B cell (primary cell): ENCODE measurements at regions of chr20 and their contacts with region 1.

Region 1: GRCh38 chr20:57596998-57597939 is 23.0 kb downstream of the ZBP1 start:
- DNase-seq: peak; percentile 88
- ATAC-seq: peak; percentile 86
- H3K4me3 ChIP-seq: peak overlapping the region in 4 of 5 experiments; percentile 23 to 48 (median 35)
- H3K4me3 Mint-ChIP-seq: no peak overlapping the region
- H3K27ac ChIP-seq: no peak overlapping the region
- H3K27ac Mint-ChIP-seq: no peak overlapping the region
- H3K4me1 ChIP-seq: peaks cover 10 to 26% of the 10 kb centered on the region in 2 donors
- H3K4me1 Mint-ChIP-seq: peaks cover 18% of the 10 kb centered on the region
- H3K27me3 ChIP-seq: peaks cover 0 to 14% (median 2%) of the 10 kb centered on the region in 4 experiments
- H3K27me3 Mint-ChIP-seq: peaks cover 5% of the 10 kb centered on the region
- CTCF ChIP-seq: peak; percentile 97

Region 2: GRCh38 chr20:57383447-57384347 is 213.6 kb before region 1 on chr20:
- CTCF ChIA-PET with region 1: interaction called, 11 read pairs
- POLR2A ChIA-PET with region 1: no interaction called
- intact Hi-C with region 1: no loop called
- DNase-seq: no peak
- ATAC-seq: no peak
- H3K4me3 ChIP-seq: no peak overlapping the region
- H3K4me3 Mint-ChIP-seq: no peak overlapping the region
- H3K27ac ChIP-seq: no peak overlapping the region
- H3K27ac Mint-ChIP-seq: peak overlapping the region; percentile 10
- H3K4me1 ChIP-seq: peaks cover 2 to 8% of the 10 kb centered on the region in 2 donors
- H3K4me1 Mint-ChIP-seq: peaks cover 13% of the 10 kb centered on the region
- H3K27me3 ChIP-seq: no peaks in the 10 kb centered on the region
- H3K27me3 Mint-ChIP-seq: no peaks in the 10 kb centered on the region
- CTCF ChIP-seq: no peak

Region 3: DNA sequence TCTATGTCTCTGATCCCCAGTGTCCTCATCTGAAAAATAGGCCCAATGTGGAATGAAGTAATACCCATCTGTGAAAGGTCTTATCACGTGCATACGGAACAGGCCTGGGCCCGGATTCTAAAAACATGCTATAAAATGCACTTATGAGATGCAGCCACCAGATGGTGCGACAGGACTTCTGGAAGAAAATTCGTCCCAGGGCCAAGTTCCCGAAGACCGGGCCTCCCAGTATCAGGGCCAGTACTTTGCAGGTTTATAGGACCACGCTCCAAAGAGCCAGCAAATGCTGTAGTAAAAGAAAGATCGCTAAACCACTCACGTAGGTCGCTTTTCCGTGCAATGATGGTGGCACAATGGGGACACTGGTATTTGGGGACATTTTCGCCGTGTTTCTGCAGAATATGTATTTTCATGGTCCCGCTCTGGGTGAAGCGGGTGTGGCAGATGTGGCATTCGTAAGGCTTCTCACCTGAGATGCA is 83.0 kb before region 1 on chr20:
- CTCF ChIA-PET with region 1: interaction called, 13 read pairs
- POLR2A ChIA-PET with region 1: no interaction called
- intact Hi-C with region 1: loop called (anchors 1 kb)
- DNase-seq: peak; percentile 60
- ATAC-seq: peak; percentile 54
- H3K4me3 ChIP-seq: no peak overlapping the region
- H3K4me3 Mint-ChIP-seq: no peak overlapping the region
- H3K27ac ChIP-seq: no peak overlapping the region
- H3K27ac Mint-ChIP-seq: no peak overlapping the region
- H3K4me1 ChIP-seq: no peaks in the 10 kb centered on the region
- H3K4me1 Mint-ChIP-seq: no peaks in the 10 kb centered on the region
- H3K27me3 ChIP-seq: peaks cover 0 to 5% (median 0%) of the 10 kb centered on the region in 4 experiments
- H3K27me3 Mint-ChIP-seq: peaks cover 7% of the 10 kb centered on the region
- CTCF ChIP-seq: peak; percentile 62

Region 4: GRCh38 chr20:57622579-57623377 is 25.5 kb after region 1 on chr20:
- CTCF ChIA-PET with region 1: interaction called, 131 read pairs
- POLR2A ChIA-PET with region 1: interaction called, 3 read pairs
- intact Hi-C with region 1: loop called (anchors 1 kb)
- DNase-seq: peak; percentile 69
- ATAC-seq: no peak
- H3K4me3 ChIP-seq: no peak overlapping the region
- H3K4me3 Mint-ChIP-seq: peak overlapping the region; percentile 13
- H3K27ac ChIP-seq: no peak overlapping the region
- H3K27ac Mint-ChIP-seq: peak overlapping the region; percentile 80
- H3K4me1 ChIP-seq: peaks cover 54 to 59% of the 10 kb centered on the region in 2 donors
- H3K4me1 Mint-ChIP-seq: peaks cover 65% of the 10 kb centered on the region
- H3K27me3 ChIP-seq: no peaks in the 10 kb centered on the region
- H3K27me3 Mint-ChIP-seq: no peaks in the 10 kb centered on the region
- CTCF ChIP-seq: peak; percentile 82

Region 5: DNA sequence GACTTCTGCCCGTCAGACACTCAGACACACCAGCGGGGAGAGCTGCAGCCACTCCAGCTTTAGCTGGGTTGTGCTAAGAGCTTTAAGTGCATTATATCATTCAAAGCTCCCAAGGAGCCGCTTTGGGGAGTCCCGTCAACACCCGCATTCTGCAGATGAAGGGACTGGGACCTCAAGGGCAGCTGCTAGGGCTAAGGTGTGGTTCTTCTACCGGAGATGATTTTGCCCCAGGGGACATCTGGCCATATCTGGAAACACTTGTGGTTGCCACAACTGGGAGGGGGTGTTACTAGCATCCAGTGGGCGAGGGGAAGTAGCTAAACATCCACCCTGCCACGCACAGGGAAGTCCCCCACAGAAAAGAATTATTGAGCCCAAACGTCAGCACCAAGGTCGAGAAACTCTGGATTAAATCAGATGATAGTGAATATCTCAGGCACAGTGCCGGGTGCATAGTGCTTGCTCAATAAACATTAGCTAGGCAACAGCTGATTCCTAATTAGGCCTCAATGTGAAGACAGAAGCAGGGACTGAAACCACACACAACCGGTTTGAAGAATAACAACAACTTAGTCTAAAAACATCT is 83.0 kb after region 1 on chr20:
- CTCF ChIA-PET with region 1: interaction called, 19 read pairs
- POLR2A ChIA-PET with region 1: no interaction called
- intact Hi-C with region 1: no loop called
- DNase-seq: peak; percentile 95
- ATAC-seq: peak; percentile 71
- H3K4me3 ChIP-seq: peak overlapping the region; percentile 3 to 55 (median 25)
- H3K4me3 Mint-ChIP-seq: peak overlapping the region; percentile 86
- H3K27ac ChIP-seq: peak overlapping the region; percentile 88 to 96
- H3K27ac Mint-ChIP-seq: peak overlapping the region; percentile 96
- H3K4me1 ChIP-seq: peaks cover 94 to 100% of the 10 kb centered on the region in 2 donors
- H3K4me1 Mint-ChIP-seq: peaks cover 99% of the 10 kb centered on the region
- H3K27me3 ChIP-seq: no peaks in the 10 kb centered on the region
- H3K27me3 Mint-ChIP-seq: no peaks in the 10 kb centered on the region
- CTCF ChIP-seq: no peak

Region 6: DNA sequence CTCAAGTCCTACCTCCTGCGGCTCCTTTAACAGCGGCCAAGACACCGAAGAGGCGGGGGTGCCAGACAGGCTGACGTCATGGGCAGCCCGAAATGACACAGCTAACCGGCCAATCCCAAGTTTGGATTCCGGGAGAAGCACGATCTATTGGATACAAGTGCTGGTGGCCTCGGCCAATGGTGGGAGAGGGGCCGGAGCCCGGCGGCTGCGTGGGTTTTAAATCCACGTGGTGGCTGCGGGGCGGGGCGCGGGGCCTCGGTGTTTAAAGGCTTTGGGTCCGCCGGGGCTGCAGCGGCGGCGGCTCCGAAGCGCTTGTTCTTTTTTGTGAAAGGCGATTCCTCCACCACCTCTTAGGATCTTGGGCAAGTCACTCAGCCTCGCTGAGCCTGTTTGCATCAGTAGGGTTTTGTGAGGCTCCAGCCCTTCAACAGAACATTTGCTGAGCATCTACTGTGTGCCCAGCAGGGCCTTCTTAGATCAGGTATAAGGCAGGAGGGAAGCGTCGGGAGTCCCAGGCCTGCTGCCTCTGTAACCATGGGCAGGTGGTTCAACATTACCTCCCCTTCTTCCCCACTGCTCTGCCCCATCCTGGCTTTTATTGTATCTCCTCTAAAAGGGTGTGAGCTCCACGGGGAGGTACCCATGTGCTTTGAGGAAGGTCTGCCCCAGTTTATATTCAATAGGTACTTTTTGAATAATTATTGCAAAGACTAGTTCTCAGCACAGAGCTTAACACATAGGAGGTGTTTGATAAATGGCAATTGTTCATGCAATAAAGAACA is 121.4 kb after region 1 on chr20:
- CTCF ChIA-PET with region 1: no interaction called
- POLR2A ChIA-PET with region 1: no interaction called
- intact Hi-C with region 1: no loop called
- DNase-seq: peak; percentile 96
- ATAC-seq: peak; percentile 100
- H3K4me3 ChIP-seq: peak overlapping the region in 4 of 5 experiments; percentile 21 to 53 (median 42)
- H3K4me3 Mint-ChIP-seq: peak overlapping the region; percentile 77
- H3K27ac ChIP-seq: no peak overlapping the region
- H3K27ac Mint-ChIP-seq: peak overlapping the region; percentile 81
- H3K4me1 ChIP-seq: peaks cover 9 to 11% of the 10 kb centered on the region in 2 donors
- H3K4me1 Mint-ChIP-seq: peaks cover 8% of the 10 kb centered on the region
- H3K27me3 ChIP-seq: peaks cover 0 to 11% (median 0%) of the 10 kb centered on the region in 4 experiments
- H3K27me3 Mint-ChIP-seq: peaks cover 7% of the 10 kb centered on the region
- CTCF ChIP-seq: no peak

Region 7: GRCh38 chr20:57772276-57773030 is 175.2 kb after region 1 on chr20:
- CTCF ChIA-PET with region 1: no interaction called
- POLR2A ChIA-PET with region 1: no interaction called
- intact Hi-C with region 1: no loop called
- DNase-seq: no peak
- ATAC-seq: peak; percentile 21
- H3K4me3 ChIP-seq: no peak overlapping the region
- H3K4me3 Mint-ChIP-seq: no peak overlapping the region
- H3K27ac ChIP-seq: no peak overlapping the region
- H3K27ac Mint-ChIP-seq: no peak overlapping the region
- H3K4me1 ChIP-seq: no peaks in the 10 kb centered on the region
- H3K4me1 Mint-ChIP-seq: no peaks in the 10 kb centered on the region
- H3K27me3 ChIP-seq: peaks cover 0 to 2% (median 0%) of the 10 kb centered on the region in 4 experiments
- H3K27me3 Mint-ChIP-seq: peaks cover 23% of the 10 kb centered on the region
- CTCF ChIP-seq: no peak

Region 8: GRCh38 chr20:58209652-58210397 is 612.6 kb after region 1 on chr20:
- CTCF ChIA-PET with region 1: interaction called, 39 read pairs
- POLR2A ChIA-PET with region 1: interaction called, 4 read pairs
- intact Hi-C with region 1: no loop called
- DNase-seq: peak; percentile 88
- ATAC-seq: peak; percentile 89
- H3K4me3 ChIP-seq: no peak overlapping the region
- H3K4me3 Mint-ChIP-seq: peak overlapping the region; percentile 14
- H3K27ac ChIP-seq: no peak overlapping the region
- H3K27ac Mint-ChIP-seq: no peak overlapping the region
- H3K4me1 ChIP-seq: peaks cover 0 to 6% of the 10 kb centered on the region in 2 donors
- H3K4me1 Mint-ChIP-seq: peaks cover 3% of the 10 kb centered on the region
- H3K27me3 ChIP-seq: peaks cover 0 to 8% (median 2%) of the 10 kb centered on the region in 4 experiments
- H3K27me3 Mint-ChIP-seq: peaks cover 14% of the 10 kb centered on the region
- CTCF ChIP-seq: peak; percentile 100